B cell (primary cell): ENCODE measurements at regions of chr14 and their contacts with region 1.

Region 1: GRCh38 chr14:73741386-73741875 is 27.2 kb upstream of the PNMA1 start:
- DNase-seq: peak; percentile 73
- ATAC-seq: peak; percentile 77
- H3K4me3 ChIP-seq: peak overlapping the region; percentile 10 to 55 (median 43)
- H3K4me3 Mint-ChIP-seq: peak overlapping the region; percentile 94
- H3K27ac ChIP-seq: peak overlapping the region; percentile 61 to 81
- H3K27ac Mint-ChIP-seq: peak overlapping the region; percentile 99
- H3K4me1 ChIP-seq: peaks cover 63 to 71% of the 10 kb centered on the region in 2 donors
- H3K4me1 Mint-ChIP-seq: peaks cover 74% of the 10 kb centered on the region
- H3K27me3 ChIP-seq: no peaks in the 10 kb centered on the region
- H3K27me3 Mint-ChIP-seq: no peaks in the 10 kb centered on the region
- CTCF ChIP-seq: no peak

Region 2: GRCh38 chr14:73771848-73772638 is 30.6 kb after region 1 on chr14:
- CTCF ChIA-PET with region 1: interaction called, 70 read pairs
- POLR2A ChIA-PET with region 1: interaction called, 9 read pairs
- intact Hi-C with region 1: no loop called
- DNase-seq: peak; percentile 89
- ATAC-seq: peak; percentile 61
- H3K4me3 ChIP-seq: peak overlapping the region in 3 of 5 experiments; percentile 5 to 52 (median 10)
- H3K4me3 Mint-ChIP-seq: peak overlapping the region; percentile 87
- H3K27ac ChIP-seq: peak overlapping the region; percentile 96 to 97
- H3K27ac Mint-ChIP-seq: peak overlapping the region; percentile 99
- H3K4me1 ChIP-seq: peaks cover 83 to 96% of the 10 kb centered on the region in 2 donors
- H3K4me1 Mint-ChIP-seq: peaks cover 76% of the 10 kb centered on the region
- H3K27me3 ChIP-seq: no peaks in the 10 kb centered on the region
- H3K27me3 Mint-ChIP-seq: no peaks in the 10 kb centered on the region
- CTCF ChIP-seq: no peak

Region 3: DNA sequence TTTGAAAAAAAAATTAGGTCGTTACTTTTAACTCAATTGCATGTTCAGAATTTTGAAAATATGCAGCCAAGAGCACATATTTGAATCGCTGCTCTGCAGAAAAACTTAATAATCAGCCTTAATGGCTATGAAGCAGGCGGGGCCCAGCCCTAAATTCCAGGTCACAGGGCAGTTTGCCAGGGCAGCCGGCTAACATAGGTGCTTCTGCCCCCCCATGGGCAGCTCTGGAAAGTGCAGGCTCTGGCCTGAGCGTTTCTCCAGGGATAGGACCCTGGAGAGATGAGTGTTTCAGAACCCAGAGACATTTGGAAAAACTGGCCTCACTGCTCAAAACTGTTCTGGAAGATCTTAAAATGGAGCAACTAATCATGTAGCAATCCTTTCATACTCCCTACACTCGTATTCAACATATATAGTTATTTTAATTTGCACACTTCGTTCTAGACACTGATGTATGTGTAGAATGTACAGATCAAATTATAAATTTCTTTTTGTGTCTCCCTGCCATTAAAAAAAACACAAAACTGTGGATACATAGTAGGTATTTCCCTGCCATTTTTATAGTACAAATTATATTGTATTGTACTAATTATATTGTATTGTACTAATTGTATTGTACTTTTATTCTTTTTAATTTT is 84.2 kb after region 1 on chr14:
- CTCF ChIA-PET with region 1: interaction called, 299 read pairs
- POLR2A ChIA-PET with region 1: no interaction called
- intact Hi-C with region 1: no loop called
- DNase-seq: peak; percentile 81
- ATAC-seq: peak; percentile 99
- H3K4me3 ChIP-seq: no peak overlapping the region
- H3K4me3 Mint-ChIP-seq: no peak overlapping the region
- H3K27ac ChIP-seq: no peak overlapping the region
- H3K27ac Mint-ChIP-seq: no peak overlapping the region
- H3K4me1 ChIP-seq: no peaks in the 10 kb centered on the region
- H3K4me1 Mint-ChIP-seq: peaks cover 4% of the 10 kb centered on the region
- H3K27me3 ChIP-seq: no peaks in the 10 kb centered on the region
- H3K27me3 Mint-ChIP-seq: no peaks in the 10 kb centered on the region
- CTCF ChIP-seq: peak; percentile 93

Region 4: DNA sequence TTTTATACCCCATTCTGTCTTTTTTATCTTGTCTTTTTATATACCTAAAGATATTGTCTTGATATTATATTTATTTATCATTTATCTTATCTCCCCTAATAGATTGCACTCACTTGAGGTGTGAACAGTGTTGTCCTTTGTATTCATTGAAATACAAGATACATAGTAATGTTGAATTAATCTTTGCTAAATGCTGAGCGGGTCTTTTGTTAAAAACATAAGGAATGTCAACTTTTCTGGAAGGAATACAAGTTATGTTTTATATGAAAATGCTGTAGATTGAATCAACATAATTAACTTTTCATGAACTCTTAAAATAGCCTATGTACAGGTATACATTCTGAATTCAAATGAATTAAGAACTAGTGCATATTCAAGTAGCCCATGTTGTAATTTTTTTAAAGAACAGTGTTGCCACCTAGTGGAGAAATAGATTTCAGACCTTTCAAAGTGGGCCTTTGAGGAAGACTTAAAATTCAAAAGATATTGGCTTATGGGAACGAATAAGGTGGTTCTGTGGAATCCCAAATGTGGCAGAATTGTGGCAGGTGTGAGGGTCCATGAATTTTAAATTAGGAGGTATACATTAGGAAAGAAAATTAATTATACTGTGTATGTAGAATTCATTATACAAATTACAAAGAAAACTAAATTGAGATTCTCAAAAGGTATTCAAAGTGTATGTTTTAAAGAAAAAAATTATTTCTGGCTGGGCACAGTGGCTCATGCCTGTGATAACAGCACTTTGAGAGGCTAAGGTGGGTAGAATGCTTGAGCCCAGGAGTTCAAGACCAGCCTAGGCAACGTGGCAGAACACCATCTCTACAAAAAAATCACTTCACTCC is 296.8 kb after region 1 on chr14:
- CTCF ChIA-PET with region 1: no interaction called
- POLR2A ChIA-PET with region 1: no interaction called
- intact Hi-C with region 1: no loop called
- DNase-seq: peak; percentile 66
- ATAC-seq: no peak
- H3K4me3 ChIP-seq: no peak overlapping the region
- H3K4me3 Mint-ChIP-seq: no peak overlapping the region
- H3K27ac ChIP-seq: no peak overlapping the region
- H3K27ac Mint-ChIP-seq: no peak overlapping the region
- H3K4me1 ChIP-seq: no peaks in the 10 kb centered on the region
- H3K4me1 Mint-ChIP-seq: no peaks in the 10 kb centered on the region
- H3K27me3 ChIP-seq: no peaks in the 10 kb centered on the region
- H3K27me3 Mint-ChIP-seq: no peaks in the 10 kb centered on the region
- CTCF ChIP-seq: peak; percentile 90